Activated T-helper 1 cell treated with anti-CD3 and anti-CD28 coated beads, Interleukin-12 subunit alpha, Interleukin-12 subunit beta, Interleukin-2, Interleukin-4 antibody, amounts not matched to agents 30 ng/mL and 10 ng/mL and 1 ng/mL, durations not matched to agents 14 hours and 24 hours and 36 hours (primary cell): ENCODE measurements at regions of chr15 and their contacts with region 1.

Region 1: GRCh38 chr15:67839929-67840748 is at the start of gene RNU6-1:
- DNase-seq: peak; percentile 95
- H3K4me3 Mint-ChIP-seq: peak within 1 kb of the TSS; percentile 87
- H3K27ac Mint-ChIP-seq: peak within 1 kb of the TSS; percentile 88
- H3K4me1 Mint-ChIP-seq: peaks cover 26% of the 10 kb centered on the region
- H3K27me3 Mint-ChIP-seq: peaks cover 29% of the 10 kb centered on the region
- total RNA-seq, gene RNU6-1: not detected in 2 replicates

Region 2: DNA sequence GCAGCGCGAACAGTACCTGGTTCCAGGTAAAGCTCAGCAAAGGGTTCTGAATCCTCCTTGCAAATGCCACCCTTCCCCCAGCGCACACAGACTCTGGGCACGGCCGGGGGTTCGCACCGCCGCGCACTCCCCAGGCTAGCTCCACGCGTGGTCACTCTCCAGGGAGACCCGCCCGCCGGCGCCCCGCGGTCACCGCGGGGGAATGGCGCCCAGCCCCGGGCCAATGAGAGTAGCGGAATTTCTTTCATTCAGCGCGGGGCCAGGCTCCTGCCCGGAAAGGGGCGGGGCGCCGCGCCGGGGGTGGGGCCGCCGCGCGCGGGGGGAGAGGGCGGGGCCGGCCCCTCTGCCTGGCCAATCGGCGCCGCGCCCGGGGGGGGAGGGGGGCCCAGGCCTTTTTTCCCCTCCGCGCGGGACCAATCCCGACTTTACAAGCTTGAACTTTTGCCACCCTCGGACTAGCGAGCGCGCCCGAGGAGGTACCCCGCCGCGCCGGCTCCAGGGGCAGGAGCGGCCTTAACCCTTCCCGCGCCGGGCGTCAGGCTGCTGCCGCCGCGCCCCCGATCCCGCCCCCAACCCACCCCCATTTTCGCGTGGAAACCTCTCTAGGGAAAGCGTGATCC is 1139.2 kb before region 1 on chr15:
- intact Hi-C with region 1: loop called (anchors 5 kb)
- DNase-seq: peak; percentile 85
- H3K4me3 Mint-ChIP-seq: peak overlapping the region; percentile 85
- H3K27ac Mint-ChIP-seq: peak overlapping the region; percentile 61
- H3K4me1 Mint-ChIP-seq: peaks cover 16% of the 10 kb centered on the region
- H3K27me3 Mint-ChIP-seq: peaks cover 21% of the 10 kb centered on the region

Region 3: DNA sequence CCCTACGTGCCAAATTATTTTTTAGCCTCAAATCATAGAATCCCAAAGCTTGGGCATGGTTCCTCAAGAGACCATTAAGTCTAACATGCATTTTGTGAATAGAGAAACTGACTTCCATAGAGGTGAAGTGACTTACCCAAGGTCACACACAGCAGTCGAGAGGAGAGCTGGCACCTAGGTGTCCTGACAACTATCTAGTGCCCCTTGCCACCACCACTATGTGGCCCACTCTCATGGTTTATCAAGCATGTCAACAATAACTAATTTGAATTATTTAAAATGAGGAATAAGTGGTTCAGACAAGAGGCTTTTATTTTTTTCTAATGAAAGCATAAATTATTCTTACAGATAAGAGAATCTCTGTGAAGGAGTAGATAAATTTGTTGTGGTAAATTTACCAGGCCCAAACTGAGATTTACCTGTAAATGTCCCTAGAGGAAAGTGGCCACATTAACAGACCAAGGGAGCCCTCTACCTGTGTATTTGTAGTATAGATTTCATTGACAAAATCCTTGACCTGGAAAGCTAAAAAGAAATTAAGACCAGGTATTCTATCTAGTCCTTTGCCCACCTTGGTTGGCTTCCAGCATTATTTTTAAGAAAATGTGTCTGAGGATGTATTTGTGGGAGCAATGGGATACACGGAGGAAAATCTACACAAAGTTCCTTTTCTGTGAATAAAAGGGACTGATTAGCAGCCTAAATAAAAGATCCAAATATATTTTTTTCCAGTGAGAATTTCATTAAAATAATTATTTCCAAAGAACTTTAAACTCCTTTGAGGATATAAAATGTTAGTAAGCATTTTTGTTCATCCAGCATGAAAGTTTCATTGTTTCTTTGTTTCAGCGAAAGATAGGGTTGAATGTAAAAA is 536.4 kb before region 1 on chr15:
- intact Hi-C with region 1: loop called (anchors 2 kb)
- DNase-seq: no peak
- H3K4me3 Mint-ChIP-seq: no peak overlapping the region
- H3K27ac Mint-ChIP-seq: no peak overlapping the region
- H3K4me1 Mint-ChIP-seq: peaks cover 5% of the 10 kb centered on the region
- H3K27me3 Mint-ChIP-seq: peaks cover 5% of the 10 kb centered on the region

Region 4: DNA sequence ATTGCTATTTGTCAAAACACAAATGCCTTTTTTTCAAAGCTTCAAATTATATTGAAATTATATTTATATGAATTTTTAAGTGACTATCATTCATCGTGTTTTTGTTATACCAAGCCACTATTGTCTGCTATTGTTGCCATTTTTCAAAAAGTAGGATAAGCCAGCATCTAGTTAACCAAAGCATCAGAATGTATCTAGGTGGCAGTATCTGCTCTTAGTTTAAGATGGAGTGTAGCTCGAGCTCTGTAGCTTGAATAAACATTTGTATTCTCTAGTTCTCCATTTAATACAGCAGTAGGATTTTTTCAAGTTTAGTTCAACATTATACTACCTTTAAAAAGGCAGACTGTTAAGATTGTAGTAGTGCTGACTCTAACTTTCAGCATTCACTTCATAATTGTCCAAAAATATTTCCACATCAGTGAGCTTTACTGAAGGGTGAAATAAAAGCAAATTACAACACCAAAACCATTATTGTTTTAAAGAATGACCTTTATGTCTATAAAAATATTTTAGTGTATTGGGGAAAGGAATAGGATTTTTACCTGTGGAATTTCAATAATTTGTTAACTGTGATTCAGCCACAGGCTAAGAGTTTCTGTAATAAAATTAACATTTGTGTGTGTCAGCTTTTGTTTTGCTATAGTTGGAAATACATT is 338.8 kb before region 1 on chr15:
- intact Hi-C with region 1: loop called (anchors 2 kb)
- DNase-seq: no peak
- H3K4me3 Mint-ChIP-seq: no peak overlapping the region
- H3K27ac Mint-ChIP-seq: no peak overlapping the region
- H3K4me1 Mint-ChIP-seq: no peaks in the 10 kb centered on the region
- H3K27me3 Mint-ChIP-seq: peaks cover 8% of the 10 kb centered on the region

Region 5: DNA sequence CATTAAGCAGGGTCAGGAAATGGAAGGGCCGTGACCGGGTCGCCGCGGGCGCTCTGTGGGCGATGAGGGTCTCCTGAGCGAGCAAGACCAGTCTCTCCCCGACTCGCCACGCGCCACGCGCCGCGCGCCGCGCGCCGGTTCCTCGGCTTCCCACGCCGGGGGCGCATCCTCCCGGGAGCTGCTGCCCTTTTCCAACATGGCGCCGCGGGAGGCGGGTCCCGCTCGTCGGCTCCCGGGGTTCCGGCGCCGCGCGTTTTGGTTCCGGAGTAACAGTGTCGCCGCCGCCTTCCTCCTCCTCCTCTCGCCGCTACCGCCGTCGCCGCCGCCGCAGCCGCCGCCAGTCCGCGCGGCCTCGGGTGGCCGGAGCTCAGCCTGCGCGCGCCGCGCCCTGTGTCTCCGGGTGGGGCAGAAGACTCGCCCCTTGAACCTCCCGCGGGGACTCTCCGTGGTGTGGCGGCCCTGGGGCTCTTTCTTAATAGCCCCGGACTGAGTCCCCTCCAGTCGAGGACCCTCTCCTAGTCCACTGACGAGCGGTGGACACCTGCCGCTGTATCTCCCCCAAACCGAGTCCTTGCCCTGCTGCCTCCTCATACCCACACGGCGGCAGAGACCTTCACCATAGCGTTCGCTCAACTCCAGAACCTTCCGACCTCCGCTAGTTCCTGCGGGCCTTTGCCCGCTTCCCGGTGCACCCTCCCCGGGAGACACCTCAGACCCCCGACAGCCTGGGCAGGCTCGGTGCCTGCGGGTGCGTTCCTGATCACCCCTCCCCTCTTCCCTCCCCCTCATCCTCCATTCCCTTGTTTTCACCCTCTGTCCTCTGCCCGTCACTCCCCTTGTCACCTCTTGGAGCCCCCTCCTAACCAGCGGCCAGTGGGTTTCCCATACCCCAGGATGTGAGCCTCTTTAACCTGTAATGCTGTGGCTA is 297.5 kb before region 1 on chr15 and contains the start of gene MAP2K5:
- intact Hi-C with region 1: loop called (anchors 1 kb)
- DNase-seq: peak; percentile 82
- H3K4me3 Mint-ChIP-seq: peak within 1 kb of the TSS; percentile 98
- H3K27ac Mint-ChIP-seq: peak within 1 kb of the TSS; percentile 96
- H3K4me1 Mint-ChIP-seq: peaks cover 43% of the 10 kb centered on the region
- H3K27me3 Mint-ChIP-seq: no peaks in the 10 kb centered on the region
- total RNA-seq, gene MAP2K5: 22.1 and 27.5 TPM in 2 replicates

Region 6: GRCh38 chr15:68053701-68054627 is 213.8 kb after region 1 on chr15 and contains the start of gene PIAS1:
- intact Hi-C with region 1: loop called (anchors 1 kb)
- DNase-seq: peak; percentile 90
- H3K4me3 Mint-ChIP-seq: peak within 1 kb of the TSS; percentile 96
- H3K27ac Mint-ChIP-seq: peak within 1 kb of the TSS; percentile 94
- H3K4me1 Mint-ChIP-seq: peaks cover 50% of the 10 kb centered on the region
- H3K27me3 Mint-ChIP-seq: no peaks in the 10 kb centered on the region
- total RNA-seq, gene PIAS1: 26.4 and 26.8 TPM in 2 replicates

Region 7: DNA sequence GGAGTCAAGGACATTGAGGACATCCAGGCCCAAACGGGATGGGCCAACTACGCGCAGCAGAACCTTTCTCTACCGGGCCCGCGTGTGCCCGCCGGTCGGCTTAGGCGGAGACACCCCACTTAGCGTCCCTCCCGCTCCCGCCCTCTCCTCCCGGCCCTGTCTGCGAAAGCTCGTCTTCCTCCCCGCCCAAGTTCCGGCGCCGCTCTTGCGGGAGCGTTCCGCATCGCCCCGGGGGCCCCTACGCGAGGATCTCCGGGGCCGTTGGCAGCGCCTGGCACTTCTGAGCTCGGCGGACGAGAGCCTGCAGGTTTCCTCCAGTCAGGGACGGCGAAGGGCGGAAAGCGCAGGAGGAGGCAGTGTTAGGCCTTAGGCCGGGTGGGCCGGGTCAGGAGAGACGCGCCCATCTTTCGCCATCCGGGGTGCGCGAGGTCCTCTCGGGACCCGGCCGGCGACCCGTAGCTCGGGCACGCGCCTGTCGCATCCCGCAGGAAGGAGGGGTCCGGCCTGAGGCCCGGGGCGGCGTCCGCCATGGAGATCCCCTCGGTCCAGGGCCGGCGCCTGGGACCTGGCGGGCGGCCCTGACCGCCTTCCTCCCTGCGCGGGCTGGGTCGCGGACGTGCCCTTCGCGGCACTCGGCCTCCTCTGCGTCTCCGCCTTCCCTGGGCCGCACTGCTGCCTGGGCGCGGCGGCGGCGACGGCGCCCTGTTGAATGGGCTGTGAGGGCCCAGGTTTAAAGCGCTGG is 437.6 kb after region 1 on chr15 and contains the start of gene FEM1B:
- intact Hi-C with region 1: loop called (anchors 1 kb)
- DNase-seq: peak; percentile 85
- H3K4me3 Mint-ChIP-seq: peak within 1 kb of the TSS; percentile 100
- H3K27ac Mint-ChIP-seq: peak within 1 kb of the TSS; percentile 97
- H3K4me1 Mint-ChIP-seq: peaks cover 68% of the 10 kb centered on the region
- H3K27me3 Mint-ChIP-seq: no peaks in the 10 kb centered on the region
- total RNA-seq, gene FEM1B: 42.8 and 49.4 TPM in 2 replicates